B cell (primary cell): ENCODE measurements at regions of chr1 and their contacts with region 1.

Region 1: DNA sequence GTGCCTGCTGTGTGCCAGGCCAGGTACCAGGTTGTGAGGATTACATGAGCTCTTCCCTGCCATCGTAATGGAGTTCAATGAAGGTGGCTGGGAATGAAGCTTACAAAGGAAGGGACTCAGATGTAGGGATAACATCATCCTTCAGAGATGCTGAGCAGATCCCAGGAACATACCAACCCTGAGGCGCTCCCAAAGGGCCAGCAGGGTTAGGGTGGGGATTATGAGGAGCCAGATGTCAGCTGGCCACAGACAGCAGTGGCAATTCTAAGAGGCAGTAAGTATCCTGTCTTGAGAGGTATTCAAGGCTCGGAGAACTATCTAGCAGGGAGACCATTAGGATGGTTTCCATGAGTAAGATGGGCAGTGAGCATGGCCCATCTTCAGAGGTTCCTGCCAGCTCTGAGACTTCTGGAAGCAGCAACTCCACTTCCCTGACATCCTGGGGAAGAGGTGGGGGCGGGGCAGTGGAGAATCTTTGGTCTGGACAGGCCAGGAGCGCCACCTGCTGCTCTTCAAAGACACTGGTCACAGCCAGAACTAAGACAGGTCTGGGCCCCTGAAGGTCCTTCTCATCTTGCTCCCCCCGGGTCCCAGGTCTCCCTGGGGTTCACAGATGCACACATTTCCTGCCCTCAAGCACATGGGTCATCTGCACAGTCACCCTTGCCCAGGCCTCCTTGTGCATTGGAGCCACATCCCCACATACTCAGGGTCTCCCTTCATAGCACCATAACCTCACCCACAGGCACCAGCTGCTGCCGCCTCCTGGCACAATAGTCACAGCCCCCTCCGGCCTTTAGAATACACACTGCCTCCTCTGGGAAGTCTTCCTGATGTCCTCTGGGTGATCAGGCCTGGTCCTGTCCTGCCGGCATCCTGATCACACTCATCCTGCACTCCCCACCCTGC is 2.7 kb upstream of the SDC3 start:
- DNase-seq: peak; percentile 74
- ATAC-seq: peak; percentile 57
- H3K4me3 ChIP-seq: no peak overlapping the region
- H3K4me3 Mint-ChIP-seq: no peak overlapping the region
- H3K27ac ChIP-seq: no peak overlapping the region
- H3K27ac Mint-ChIP-seq: no peak overlapping the region
- H3K4me1 ChIP-seq: peaks cover 30 to 31% of the 10 kb centered on the region in 2 donors
- H3K4me1 Mint-ChIP-seq: peaks cover 29% of the 10 kb centered on the region
- H3K27me3 ChIP-seq: peaks cover 0 to 40% (median 18%) of the 10 kb centered on the region in 4 experiments
- H3K27me3 Mint-ChIP-seq: peaks cover 32% of the 10 kb centered on the region
- CTCF ChIP-seq: peak; percentile 72

Region 2: GRCh38 chr1:30856260-30856790 is 55.0 kb before region 1 on chr1:
- CTCF ChIA-PET with region 1: no interaction called
- POLR2A ChIA-PET with region 1: no interaction called
- intact Hi-C with region 1: loop called (anchors 10 kb)
- DNase-seq: no peak
- ATAC-seq: no peak
- H3K4me3 ChIP-seq: no peak overlapping the region
- H3K4me3 Mint-ChIP-seq: no peak overlapping the region
- H3K27ac ChIP-seq: no peak overlapping the region
- H3K27ac Mint-ChIP-seq: no peak overlapping the region
- H3K4me1 ChIP-seq: peaks cover 0 to 3% of the 10 kb centered on the region in 2 donors
- H3K4me1 Mint-ChIP-seq: peaks cover 3% of the 10 kb centered on the region
- H3K27me3 ChIP-seq: peaks cover 0 to 7% (median 2%) of the 10 kb centered on the region in 4 experiments
- H3K27me3 Mint-ChIP-seq: peaks cover 50% of the 10 kb centered on the region
- CTCF ChIP-seq: no peak

Region 3: GRCh38 chr1:30892671-30893073 is 18.6 kb before region 1 on chr1:
- CTCF ChIA-PET with region 1: interaction called, 13 read pairs
- POLR2A ChIA-PET with region 1: no interaction called
- intact Hi-C with region 1: no loop called
- DNase-seq: no peak
- ATAC-seq: no peak
- H3K4me3 ChIP-seq: no peak overlapping the region
- H3K4me3 Mint-ChIP-seq: no peak overlapping the region
- H3K27ac ChIP-seq: no peak overlapping the region
- H3K27ac Mint-ChIP-seq: no peak overlapping the region
- H3K4me1 ChIP-seq: peaks cover 5 to 12% of the 10 kb centered on the region in 2 donors
- H3K4me1 Mint-ChIP-seq: peaks cover 8% of the 10 kb centered on the region
- H3K27me3 ChIP-seq: peaks cover 0 to 34% (median 15%) of the 10 kb centered on the region in 4 experiments
- H3K27me3 Mint-ChIP-seq: peaks cover 40% of the 10 kb centered on the region
- CTCF ChIP-seq: no peak

Region 4: GRCh38 chr1:30929135-30929889 is 18.0 kb after region 1 on chr1:
- CTCF ChIA-PET with region 1: interaction called, 24 read pairs
- POLR2A ChIA-PET with region 1: no interaction called
- intact Hi-C with region 1: no loop called
- DNase-seq: peak; percentile 65
- ATAC-seq: peak; percentile 71
- H3K4me3 ChIP-seq: no peak overlapping the region
- H3K4me3 Mint-ChIP-seq: no peak overlapping the region
- H3K27ac ChIP-seq: no peak overlapping the region
- H3K27ac Mint-ChIP-seq: peak overlapping the region; percentile 26
- H3K4me1 ChIP-seq: peaks cover 0 to 11% of the 10 kb centered on the region in 2 donors
- H3K4me1 Mint-ChIP-seq: peaks cover 13% of the 10 kb centered on the region
- H3K27me3 ChIP-seq: no peaks in the 10 kb centered on the region
- H3K27me3 Mint-ChIP-seq: no peaks in the 10 kb centered on the region
- CTCF ChIP-seq: peak; percentile 86

Region 5: DNA sequence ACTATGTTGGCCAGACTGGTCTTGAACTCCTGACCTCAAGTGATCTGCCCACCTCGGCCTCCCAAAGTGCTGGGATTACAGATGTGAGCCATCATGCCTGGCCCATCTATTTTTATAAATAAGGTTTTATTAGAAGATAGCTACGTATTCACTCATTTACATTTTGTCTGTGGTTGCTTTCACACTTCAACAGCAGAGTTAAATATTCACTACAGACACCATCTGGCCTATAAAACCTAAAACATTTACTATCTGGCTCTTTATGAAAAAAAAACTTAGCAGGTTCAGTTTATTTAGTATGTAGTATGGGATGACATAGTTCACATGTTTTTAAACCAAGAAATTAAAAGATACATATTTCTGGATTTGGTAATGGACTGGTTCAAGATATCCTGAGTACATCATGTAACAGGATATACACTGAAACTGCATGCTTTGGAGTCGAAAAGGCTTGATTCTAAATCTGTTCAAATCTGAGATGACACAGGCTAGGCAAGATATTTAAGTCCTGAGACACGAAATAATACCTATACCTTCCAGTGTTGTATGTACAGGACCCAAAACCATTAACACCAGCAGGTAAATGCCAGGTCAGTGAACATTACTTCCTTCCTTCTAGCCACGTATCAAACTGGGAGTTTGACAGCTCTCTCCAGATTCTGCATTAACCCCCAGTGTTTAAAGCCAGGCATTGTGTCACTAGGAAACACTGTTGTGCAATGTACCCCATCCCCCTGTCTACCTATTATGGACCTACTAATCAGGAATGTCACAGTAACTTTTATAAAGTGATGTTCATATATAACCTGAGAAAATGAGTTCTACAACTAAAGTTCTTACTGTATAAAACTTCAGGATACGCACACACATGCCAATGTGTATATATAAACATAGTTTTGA is 51.6 kb after region 1 on chr1:
- CTCF ChIA-PET with region 1: no interaction called
- POLR2A ChIA-PET with region 1: no interaction called
- intact Hi-C with region 1: no loop called
- DNase-seq: no peak
- ATAC-seq: no peak
- H3K4me3 ChIP-seq: no peak overlapping the region
- H3K4me3 Mint-ChIP-seq: no peak overlapping the region
- H3K27ac ChIP-seq: peak overlapping the region in 1 of 2 donors; percentile 45
- H3K27ac Mint-ChIP-seq: no peak overlapping the region
- H3K4me1 ChIP-seq: no peaks in the 10 kb centered on the region
- H3K4me1 Mint-ChIP-seq: peaks cover 17% of the 10 kb centered on the region
- H3K27me3 ChIP-seq: no peaks in the 10 kb centered on the region
- H3K27me3 Mint-ChIP-seq: no peaks in the 10 kb centered on the region
- CTCF ChIP-seq: no peak